Common myeloid progenitor, CD34-positive (primary cell): ENCODE measurements at regions of chr9 and their contacts with region 1.

Region 1: DNA sequence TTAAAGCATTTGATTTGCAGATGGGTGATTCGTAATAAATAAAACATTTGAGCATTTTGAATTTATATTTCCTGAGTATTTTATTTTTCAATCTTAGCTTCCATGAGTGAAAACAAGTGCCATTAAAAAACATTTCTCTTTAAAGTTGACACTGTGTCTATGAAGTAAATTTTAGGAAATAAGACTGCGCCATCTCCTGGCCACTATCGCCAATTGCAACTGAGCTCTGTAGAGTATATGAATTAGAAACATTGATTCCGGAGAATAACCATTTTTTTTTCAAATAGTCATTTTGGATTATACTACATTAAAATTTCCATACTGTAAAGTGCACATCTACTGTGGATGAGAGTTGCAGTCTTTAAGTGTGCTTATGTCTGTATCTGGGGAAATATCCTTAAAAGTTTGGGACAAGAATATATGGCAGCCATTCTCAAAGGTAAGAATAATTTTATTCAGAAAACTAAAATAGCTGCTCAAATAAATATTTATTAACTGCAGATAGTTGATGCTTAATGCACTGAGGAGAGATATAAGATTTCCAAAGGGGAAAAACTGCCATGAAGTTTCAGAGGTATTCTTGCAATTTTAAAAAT is 5.9 kb downstream of the DMRTA1 start:
- DNase-seq: peak; percentile 43 to 73 (median 59)
- H3K4me3 ChIP-seq: no peak overlapping the region
- H3K27ac ChIP-seq: no peak overlapping the region
- H3K4me1 ChIP-seq: peaks cover 0 to 6% (median under 1%) of the 10 kb centered on the region in 4 experiments
- H3K27me3 ChIP-seq: peaks cover 0 to 11% (median 7%) of the 10 kb centered on the region in 5 experiments

Region 2: DNA sequence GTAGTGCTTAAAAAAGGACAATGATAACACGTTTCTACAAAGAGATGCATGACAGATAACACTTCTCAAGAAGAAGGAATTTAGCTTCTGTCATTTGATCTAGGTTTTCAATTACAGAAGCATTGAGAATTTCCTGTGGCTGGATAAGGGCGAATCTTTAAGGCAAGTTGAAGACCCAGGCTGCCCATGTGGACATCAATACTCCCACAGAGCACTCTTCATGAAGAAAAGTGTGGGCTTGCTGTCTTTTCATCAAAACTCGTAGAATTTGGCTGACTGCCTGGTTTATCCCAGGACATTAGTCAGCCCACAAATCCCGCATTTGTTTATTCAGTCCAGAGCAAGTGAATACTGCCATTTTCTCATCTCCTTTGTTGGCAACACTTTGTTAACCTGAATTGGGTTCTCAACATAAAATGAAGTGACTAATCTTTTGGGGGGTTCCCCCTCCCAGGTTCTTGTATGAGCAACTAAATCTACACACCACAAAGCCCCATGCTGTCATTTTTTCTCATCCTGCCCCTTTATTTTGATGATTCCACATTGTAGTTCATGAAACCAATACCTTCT is 400.1 kb before region 1 on chr9:
- CTCF ChIA-PET with region 1: no interaction called
- POLR2A ChIA-PET with region 1: no interaction called
- DNase-seq: peak in 2 of 3 donors; percentile 50 to 55
- H3K4me3 ChIP-seq: no peak overlapping the region
- H3K27ac ChIP-seq: no peak overlapping the region
- H3K4me1 ChIP-seq: peaks cover 7 to 21% (median 14%) of the 10 kb centered on the region in 4 experiments
- H3K27me3 ChIP-seq: peaks cover 7 to 73% (median 49%) of the 10 kb centered on the region in 5 experiments

Region 3: GRCh38 chr9:22307013-22307711 is 145.4 kb before region 1 on chr9:
- CTCF ChIA-PET with region 1: interaction called, 27 read pairs
- POLR2A ChIA-PET with region 1: no interaction called
- DNase-seq: peak; percentile 58 to 77 (median 74)
- H3K4me3 ChIP-seq: no peak overlapping the region
- H3K27ac ChIP-seq: no peak overlapping the region
- H3K4me1 ChIP-seq: no peaks in the 10 kb centered on the region
- H3K27me3 ChIP-seq: peaks cover 0 to 9% (median 0%) of the 10 kb centered on the region in 5 experiments

Region 4: DNA sequence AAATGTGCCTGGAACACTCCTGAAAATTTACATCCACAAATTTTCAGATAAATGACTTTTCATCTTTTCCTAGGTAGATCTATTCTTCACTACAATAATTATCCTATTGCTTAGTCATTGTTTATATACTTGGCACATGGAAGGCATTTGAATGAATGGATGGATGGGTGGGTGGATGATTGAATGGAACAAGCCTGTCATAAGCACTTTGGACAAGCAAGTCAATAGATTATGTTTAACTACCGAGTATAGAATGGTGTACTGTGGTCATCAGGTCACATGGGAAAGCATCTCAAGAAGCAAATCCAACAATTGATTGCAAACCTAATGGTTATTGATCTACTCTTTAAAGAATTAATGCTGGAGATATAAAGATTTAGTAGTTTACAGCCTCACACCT is 120.3 kb before region 1 on chr9:
- CTCF ChIA-PET with region 1: no interaction called
- POLR2A ChIA-PET with region 1: no interaction called
- DNase-seq: no peak
- H3K4me3 ChIP-seq: no peak overlapping the region
- H3K27ac ChIP-seq: no peak overlapping the region
- H3K4me1 ChIP-seq: no peaks in the 10 kb centered on the region
- H3K27me3 ChIP-seq: peaks cover 0 to 1% (median 0%) of the 10 kb centered on the region in 5 experiments

Region 5: GRCh38 chr9:22392523-22392922 is 60.0 kb before region 1 on chr9:
- CTCF ChIA-PET with region 1: no interaction called
- POLR2A ChIA-PET with region 1: no interaction called
- DNase-seq: no peak
- H3K4me3 ChIP-seq: no peak overlapping the region
- H3K27ac ChIP-seq: no peak overlapping the region
- H3K4me1 ChIP-seq: no peaks in the 10 kb centered on the region
- H3K27me3 ChIP-seq: no peaks in the 10 kb centered on the region